GM10248 (cell line): ENCODE measurements at regions of chr14 and their contacts with region 1.

Region 1: GRCh38 chr14:50619556-50620141 is 48.5 kb downstream of the SAV1 start:
- DNase-seq: peak; percentile 39
- CTCF ChIP-seq: peak; percentile 57

Region 2: GRCh38 chr14:50383618-50384225 is 235.9 kb before region 1 on chr14:
- CTCF ChIA-PET with region 1: no interaction called
- POLR2A ChIA-PET with region 1: no interaction called
- DNase-seq: no peak
- CTCF ChIP-seq: no peak

Region 3: DNA sequence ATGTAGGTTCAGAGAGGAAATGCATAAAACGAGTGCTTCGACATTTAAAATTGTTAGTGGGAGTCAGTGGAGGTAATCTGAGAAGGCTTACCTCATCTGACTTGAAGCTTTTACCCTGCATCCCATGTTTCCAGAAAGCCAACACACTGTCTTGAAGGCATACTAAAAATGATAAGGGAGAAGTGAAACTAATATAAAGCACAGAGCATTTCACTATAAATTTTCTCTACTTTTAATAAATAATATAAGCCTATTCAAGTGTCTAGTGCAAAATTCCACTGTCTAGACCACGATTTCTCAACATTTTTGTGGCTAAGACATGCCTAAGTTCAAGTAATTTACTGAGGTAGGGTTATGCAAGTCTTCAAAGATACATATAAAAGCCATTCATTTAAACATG is 193.8 kb before region 1 on chr14:
- CTCF ChIA-PET with region 1: no interaction called
- POLR2A ChIA-PET with region 1: no interaction called
- DNase-seq: no peak
- CTCF ChIP-seq: no peak

Region 4: GRCh38 chr14:50599700-50600444 is 19.8 kb before region 1 on chr14:
- CTCF ChIA-PET with region 1: interaction called, 15 read pairs
- POLR2A ChIA-PET with region 1: no interaction called
- DNase-seq: peak; percentile 17
- CTCF ChIP-seq: peak; percentile 54

Region 5: DNA sequence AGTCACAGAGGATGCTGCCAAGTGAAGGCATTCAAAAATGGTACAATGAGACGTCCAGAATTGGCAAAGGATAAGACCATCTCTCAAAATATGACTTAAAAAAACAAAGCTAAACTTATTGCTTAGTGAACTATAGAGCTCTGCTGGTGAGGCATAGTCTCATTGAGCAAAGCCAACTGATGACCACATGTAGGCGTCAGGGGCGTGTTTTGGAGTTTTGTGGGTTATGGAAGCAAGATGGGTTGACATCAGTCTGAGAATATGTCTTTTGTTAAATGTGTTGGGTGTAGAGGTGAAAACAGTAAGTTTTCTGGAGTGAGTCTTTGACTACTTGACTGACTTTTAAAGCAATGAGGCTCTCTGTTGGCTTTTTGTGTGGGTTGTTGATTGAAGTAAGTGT is 12.5 kb before region 1 on chr14:
- CTCF ChIA-PET with region 1: interaction called, 19 read pairs
- POLR2A ChIA-PET with region 1: no interaction called
- DNase-seq: no peak
- CTCF ChIP-seq: no peak

Region 6: DNA sequence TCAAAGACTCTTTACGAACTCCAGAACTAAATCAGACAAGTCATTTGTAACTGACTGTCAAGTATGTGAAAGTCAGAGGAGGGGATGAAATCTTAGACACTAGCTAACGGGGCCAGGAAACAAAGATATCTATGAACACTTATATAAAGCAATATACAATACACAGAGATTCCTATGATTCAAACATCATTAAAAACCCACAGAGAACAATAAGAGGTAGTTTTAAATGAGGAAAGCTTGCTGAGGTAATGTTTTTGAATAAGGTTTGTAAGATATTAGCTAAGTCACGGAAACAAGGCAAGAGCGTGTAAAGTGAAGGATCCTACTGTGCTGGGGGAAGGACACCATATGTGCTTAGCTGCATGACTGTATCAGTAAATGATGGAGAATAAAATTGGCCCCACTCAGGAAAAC is 11.8 kb after region 1 on chr14:
- CTCF ChIA-PET with region 1: interaction called, 19 read pairs
- POLR2A ChIA-PET with region 1: no interaction called
- DNase-seq: no peak
- CTCF ChIP-seq: no peak

Region 7: GRCh38 chr14:50649691-50650090 is 30.0 kb after region 1 on chr14:
- CTCF ChIA-PET with region 1: interaction called, 12 read pairs
- POLR2A ChIA-PET with region 1: no interaction called
- DNase-seq: peak; percentile 24
- CTCF ChIP-seq: no peak

Region 8: DNA sequence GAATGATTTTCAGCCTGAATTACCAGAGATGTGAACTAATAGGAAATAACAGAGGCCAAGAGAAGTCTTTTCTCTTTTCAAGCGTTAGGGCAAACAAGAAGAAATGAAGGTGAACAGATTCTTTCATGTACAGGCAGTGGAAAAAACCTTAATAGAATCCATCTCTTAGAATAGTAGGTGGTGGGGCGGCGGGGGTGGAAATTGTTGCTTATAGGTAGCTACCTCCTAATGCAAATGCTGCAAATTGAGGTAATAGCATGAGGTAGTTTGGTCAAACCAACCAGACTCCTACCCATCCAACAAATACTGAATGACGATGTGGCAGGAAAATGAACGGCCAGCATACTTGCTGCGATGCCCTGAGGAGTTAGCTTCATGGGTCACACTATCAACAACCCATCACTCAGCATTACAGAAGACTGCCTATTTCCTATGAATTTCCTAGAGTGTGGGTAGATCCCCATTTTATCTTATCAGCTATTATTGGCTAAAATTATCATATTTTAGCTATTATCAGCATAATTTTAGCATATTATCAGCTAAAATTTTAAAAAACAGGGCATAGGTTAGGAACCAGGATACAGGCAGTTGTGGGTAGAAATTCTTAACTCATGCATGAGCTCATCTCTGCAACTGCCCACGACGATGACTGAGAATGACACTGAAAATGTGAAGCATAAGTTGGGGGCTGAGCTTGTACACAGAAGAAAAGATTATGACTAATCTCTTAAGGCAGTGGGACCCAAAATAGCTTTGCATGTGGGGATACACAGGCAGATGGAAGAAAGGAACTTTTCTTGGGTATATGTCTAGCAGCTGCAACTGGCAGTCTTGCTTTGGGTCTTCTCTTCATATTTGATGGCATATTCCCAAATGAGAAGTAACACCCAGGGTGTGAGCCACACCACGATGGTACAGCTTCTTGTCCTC is 142.6 kb after region 1 on chr14:
- CTCF ChIA-PET with region 1: interaction called, 10 read pairs
- POLR2A ChIA-PET with region 1: no interaction called
- DNase-seq: peak; percentile 69
- CTCF ChIP-seq: no peak